PC-9 (cell line): ENCODE measurements at regions of chr16 and their contacts with region 1.

Region 1: GRCh38 chr16:31134625-31135547 is 641 bp downstream of the PRSS8 start:
- DNase-seq: peak; percentile 70 to 76
- H3K4me3 ChIP-seq: peak overlapping the region; percentile 59
- H3K27ac ChIP-seq: peak overlapping the region; percentile 71
- H3K4me1 ChIP-seq: peaks cover 68% of the 10 kb centered on the region
- H3K27me3 ChIP-seq: no peaks in the 10 kb centered on the region
- CTCF ChIP-seq: no peak; the same call in 1 of the 2 replicates

Region 2: GRCh38 chr16:31073968-31074813 is 60.7 kb before region 1 on chr16 and contains the starts of genes ZNF646 and ZNF668:
- CTCF ChIA-PET with region 1: no interaction called
- POLR2A ChIA-PET with region 1: interaction called, 5 read pairs
- intact Hi-C with region 1: loop called (anchors 2 kb)
- DNase-seq: peak; percentile 98 to 99
- H3K4me3 ChIP-seq: peak within 1 kb of the TSS; percentile 89
- H3K27ac ChIP-seq: peak within 1 kb of the TSS; percentile 62
- H3K4me1 ChIP-seq: peaks cover 20% of the 10 kb centered on the region
- H3K27me3 ChIP-seq: no peaks in the 10 kb centered on the region
- CTCF ChIP-seq: no peak
- total RNA-seq, gene ZNF646: 25.4 and 30.7 TPM in 2 replicates
- total RNA-seq, gene ZNF668: 13.2 and 17.4 TPM in 2 replicates